Naive thymus-derived CD8-positive, alpha-beta T cell (primary cell): ENCODE measurements at regions of chrX and their contacts with region 1.

Region 1: GRCh38 chrX:71541210-71542022 is 8.5 kb downstream of the OGT start:
- DNase-seq: no peak
- ATAC-seq: peak in 1 of 2 donors; percentile 28
- H3K4me3 Mint-ChIP-seq: peak overlapping the region; percentile 43 to 99 (median 78)
- H3K27ac Mint-ChIP-seq: peak overlapping the region; percentile 10 to 93 (median 68)
- H3K4me1 Mint-ChIP-seq: peaks cover 22 to 85% (median 58%) of the 10 kb centered on the region in 4 donors
- H3K27me3 Mint-ChIP-seq: no peaks in the 10 kb centered on the region

Region 2: DNA sequence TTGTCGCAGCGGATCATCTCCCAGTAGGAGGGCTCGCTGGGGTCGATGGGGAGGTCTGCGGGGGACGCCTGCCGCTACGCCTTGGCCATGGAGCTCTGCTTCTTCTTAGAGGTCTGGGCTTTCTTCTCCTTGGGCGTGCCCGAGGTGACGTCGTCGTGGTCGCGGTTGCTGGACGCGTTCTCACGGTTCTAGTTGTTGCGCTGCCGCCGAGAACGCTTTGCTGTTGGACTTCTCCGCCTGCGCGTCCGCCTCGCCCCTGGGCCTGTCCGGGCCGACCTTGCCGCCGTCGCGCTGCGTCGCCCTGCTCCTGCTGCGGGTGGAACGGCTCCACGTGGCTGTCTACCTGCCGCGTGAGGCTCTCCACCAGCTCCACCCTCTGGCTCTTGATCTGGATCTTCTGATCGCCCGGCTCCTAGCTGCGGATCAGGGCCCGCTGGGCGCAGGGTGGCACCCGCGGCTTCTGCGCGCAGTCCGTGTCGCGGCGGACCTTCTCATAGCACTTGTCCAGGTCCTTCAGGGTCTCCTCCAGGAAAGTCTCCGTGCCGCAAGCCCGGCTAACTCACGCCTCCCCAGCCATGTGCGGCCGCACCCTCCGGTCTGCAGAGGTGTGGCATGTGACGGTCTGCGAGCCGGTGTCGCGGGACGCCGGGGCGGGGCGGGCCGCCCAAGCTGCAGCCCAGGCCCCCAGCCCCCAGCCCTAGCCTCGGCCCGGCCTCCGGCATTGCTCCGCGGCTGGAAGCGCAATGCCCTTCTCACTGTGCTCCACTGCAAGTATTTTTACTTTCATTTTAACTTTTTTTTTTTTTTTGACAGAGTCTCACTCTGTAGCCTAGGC is 49.0 kb before region 1 on chrX:
- POLR2A ChIA-PET with region 1: interaction called, 14 read pairs
- DNase-seq: peak; percentile 11 to 70 (median 35)
- ATAC-seq: peak; percentile 87 to 88
- H3K4me3 Mint-ChIP-seq: peak overlapping the region; percentile 76 to 89 (median 84)
- H3K27ac Mint-ChIP-seq: peak overlapping the region in 8 of 10 donors; percentile 34 to 86 (median 79)
- H3K4me1 Mint-ChIP-seq: peaks cover 7 to 22% (median 11%) of the 10 kb centered on the region in 4 donors
- H3K27me3 Mint-ChIP-seq: no peaks in the 10 kb centered on the region

Region 3: DNA sequence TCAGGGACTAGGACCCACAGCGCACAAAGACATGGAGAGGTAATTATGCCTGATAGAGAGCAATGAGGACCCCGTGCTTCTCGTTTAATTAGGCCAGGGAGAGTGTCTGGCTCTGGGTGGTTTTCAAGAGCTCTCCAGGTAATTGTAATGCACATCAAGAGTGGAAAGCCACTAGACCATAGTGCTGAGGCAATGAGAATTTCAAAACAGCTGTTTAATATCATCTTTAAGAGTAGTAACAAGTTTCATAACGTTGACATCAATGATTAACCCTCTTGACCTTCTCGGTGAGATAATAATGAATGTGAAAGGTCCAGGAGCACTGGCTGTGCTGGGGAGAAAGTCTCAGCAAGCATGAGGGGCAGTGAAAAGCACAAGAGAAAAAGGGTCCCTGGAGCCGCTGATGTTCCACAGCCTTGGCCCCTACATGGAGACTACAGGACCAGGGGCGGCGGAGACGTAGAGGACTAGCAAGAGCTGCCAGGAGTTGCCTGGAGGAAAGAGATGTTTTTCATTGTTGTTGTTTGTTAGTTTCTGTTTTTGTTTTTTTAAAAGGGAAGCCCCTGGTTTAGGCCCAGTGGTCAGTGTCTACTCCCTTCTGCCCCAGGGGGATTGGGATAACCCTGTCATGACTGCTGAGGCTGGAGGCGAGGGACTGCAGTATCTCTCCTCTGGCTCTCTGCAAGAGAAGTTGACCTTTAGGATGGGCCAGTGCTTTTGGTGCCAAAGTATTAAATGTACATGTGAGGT is 91.7 kb after region 1 on chrX:
- POLR2A ChIA-PET with region 1: no interaction called
- DNase-seq: no peak
- ATAC-seq: no peak
- H3K4me3 Mint-ChIP-seq: no peak overlapping the region
- H3K27ac Mint-ChIP-seq: no peak overlapping the region
- H3K4me1 Mint-ChIP-seq: peaks cover 7 to 25% (median 16%) of the 10 kb centered on the region in 4 donors
- H3K27me3 Mint-ChIP-seq: no peaks in the 10 kb centered on the region